CD8-positive, alpha-beta T cell (primary cell): ENCODE measurements at regions of chr17 and their contacts with region 1.

Region 1: DNA sequence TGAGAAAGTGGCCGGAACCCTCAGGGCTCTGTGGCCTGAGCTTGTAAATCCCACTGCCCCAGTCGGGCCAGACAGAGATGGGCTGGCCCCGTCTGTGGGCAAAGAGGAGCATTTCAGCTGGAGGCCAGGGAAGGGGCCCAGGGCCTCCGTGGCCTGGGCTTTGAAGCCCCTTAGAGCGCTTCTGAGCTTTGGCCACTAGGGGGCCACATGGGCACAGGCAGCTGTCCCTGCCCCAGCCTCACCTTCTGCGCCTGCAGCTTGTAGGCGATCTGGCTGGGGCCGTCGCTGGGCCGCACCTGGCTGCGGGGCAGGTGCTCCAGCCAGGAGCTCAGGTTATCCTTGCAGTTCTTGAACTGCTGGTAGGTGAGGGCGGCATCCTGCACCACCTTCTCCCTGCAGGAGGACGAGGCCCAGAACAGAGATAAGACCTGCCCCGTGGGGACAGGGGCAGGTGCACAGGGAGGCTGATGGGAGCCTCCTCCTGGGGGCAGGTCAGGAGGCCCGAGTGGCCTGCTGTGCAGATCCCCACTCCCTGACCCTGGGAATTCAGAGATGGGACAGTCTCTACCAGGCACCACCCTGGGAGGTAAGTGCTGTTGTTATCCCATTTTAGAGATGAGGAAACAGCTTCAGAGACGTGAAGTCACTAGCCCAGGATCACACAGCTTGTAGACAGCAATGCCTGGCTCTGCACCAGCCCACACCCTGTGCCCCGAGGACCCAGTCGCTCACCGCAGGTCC is 12.8 kb downstream of the EVPL start:
- DNase-seq: peak; percentile 52 to 90 (median 81)
- ATAC-seq: peak; percentile 100
- H3K4me3 ChIP-seq: peak overlapping the region in 1 of 2 experiments; percentile 20
- H3K4me3 Mint-ChIP-seq: peak overlapping the region; percentile 64
- H3K27ac ChIP-seq: peak overlapping the region in 1 of 2 experiments; percentile 26
- H3K27ac Mint-ChIP-seq: no peak overlapping the region
- H3K4me1 ChIP-seq: peaks cover 14% of the 10 kb centered on the region
- H3K4me1 Mint-ChIP-seq: peaks cover 14% of the 10 kb centered on the region
- H3K27me3 ChIP-seq: no peaks in the 10 kb centered on the region
- H3K27me3 Mint-ChIP-seq: no peaks in the 10 kb centered on the region
- CTCF ChIP-seq: peak; percentile 94

Region 2: DNA sequence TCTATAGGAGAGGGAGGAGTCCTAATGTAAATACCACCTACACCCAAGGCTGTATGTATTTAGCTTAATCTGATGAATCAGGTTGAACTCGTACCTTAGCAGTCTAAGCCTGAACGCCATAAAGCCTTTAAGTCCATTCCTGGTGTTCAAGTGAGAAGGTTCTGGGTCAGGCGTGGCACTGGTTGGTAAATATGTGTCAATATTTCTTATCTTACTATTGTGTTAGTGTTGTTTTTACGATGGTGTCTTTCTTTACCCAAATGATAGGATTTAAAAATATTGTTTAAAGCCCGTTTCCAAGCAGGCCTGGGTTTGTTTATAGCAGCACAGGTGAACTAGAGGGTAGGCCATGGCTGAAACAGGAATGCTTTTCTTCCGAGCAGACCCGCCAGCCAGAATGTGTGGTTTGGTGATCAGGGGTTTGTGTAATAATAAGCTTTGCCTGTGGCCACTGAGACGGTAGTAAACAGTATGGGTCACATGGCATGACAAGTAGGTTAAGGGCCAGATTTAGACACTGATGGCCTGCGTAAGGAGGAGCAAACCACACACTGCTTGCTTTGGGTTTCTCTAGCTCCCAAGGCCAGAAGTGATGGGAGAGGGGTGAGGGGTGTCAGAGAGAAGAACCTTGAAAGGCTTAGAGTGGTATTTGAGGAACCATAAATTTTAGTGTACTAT is 554.6 kb before region 1 on chr17:
- CTCF ChIA-PET with region 1: no interaction called
- POLR2A ChIA-PET with region 1: no interaction called
- intact Hi-C with region 1: no loop called
- DNase-seq: peak in 1 of 9 experiments; percentile 17
- ATAC-seq: no peak
- H3K4me3 ChIP-seq: no peak overlapping the region
- H3K4me3 Mint-ChIP-seq: no peak overlapping the region
- H3K27ac ChIP-seq: peak overlapping the region in 1 of 2 experiments; percentile 22
- H3K27ac Mint-ChIP-seq: no peak overlapping the region
- H3K4me1 ChIP-seq: peaks cover 16% of the 10 kb centered on the region
- H3K4me1 Mint-ChIP-seq: peaks cover 42% of the 10 kb centered on the region
- H3K27me3 ChIP-seq: no peaks in the 10 kb centered on the region
- H3K27me3 Mint-ChIP-seq: no peaks in the 10 kb centered on the region
- CTCF ChIP-seq: no peak

Region 3: DNA sequence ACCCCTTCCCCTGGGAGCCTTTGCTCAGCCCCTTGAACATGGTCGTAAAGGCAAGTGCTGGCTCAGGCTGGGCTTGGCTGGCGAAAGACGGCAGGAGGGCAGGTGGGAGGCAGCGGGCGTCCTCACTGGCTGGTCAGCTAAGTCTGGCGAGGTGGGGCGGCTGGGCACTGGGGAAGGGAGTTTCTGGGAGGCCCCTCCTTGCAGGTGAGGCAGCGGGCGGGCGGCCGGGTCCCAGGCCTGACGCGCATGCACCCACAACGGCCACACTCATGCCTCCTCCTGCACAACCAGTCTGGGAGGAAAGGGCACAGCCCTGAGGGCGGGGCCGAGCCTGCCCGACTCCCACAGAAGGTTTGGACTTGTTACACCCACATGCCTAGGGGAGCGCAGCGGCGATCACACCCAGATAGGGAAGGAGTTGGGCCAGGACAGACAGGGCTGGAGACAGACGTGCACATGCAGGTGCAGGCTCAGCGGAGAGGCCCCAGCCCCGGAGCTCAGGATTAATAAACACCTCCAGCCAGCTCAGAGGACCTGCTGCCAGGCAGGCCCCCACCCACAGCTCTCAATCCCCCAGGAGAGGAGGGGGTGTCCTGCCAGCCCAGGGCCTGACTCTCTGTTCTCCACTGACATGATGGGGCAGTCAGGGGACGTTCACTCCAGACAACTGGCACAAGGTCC is 12.9 kb after region 1 on chr17 and contains the start of gene EVPL:
- CTCF ChIA-PET with region 1: interaction called, 32 read pairs
- POLR2A ChIA-PET with region 1: interaction called, 11 read pairs
- intact Hi-C with region 1: loop called in 1 of 2 experiments (anchors 1 kb)
- DNase-seq: no peak
- ATAC-seq: no peak
- H3K4me3 ChIP-seq: no peak within 1 kb of the TSS
- H3K4me3 Mint-ChIP-seq: no peak within 1 kb of the TSS
- H3K27ac ChIP-seq: no peak within 1 kb of the TSS
- H3K27ac Mint-ChIP-seq: peak within 1 kb of the TSS; percentile 98
- H3K4me1 ChIP-seq: peaks cover 43% of the 10 kb centered on the region
- H3K4me1 Mint-ChIP-seq: peaks cover 39% of the 10 kb centered on the region
- H3K27me3 ChIP-seq: no peaks in the 10 kb centered on the region
- H3K27me3 Mint-ChIP-seq: no peaks in the 10 kb centered on the region
- CTCF ChIP-seq: no peak
- total RNA-seq, gene EVPL: 0.38 to 1.1 TPM

Region 4: DNA sequence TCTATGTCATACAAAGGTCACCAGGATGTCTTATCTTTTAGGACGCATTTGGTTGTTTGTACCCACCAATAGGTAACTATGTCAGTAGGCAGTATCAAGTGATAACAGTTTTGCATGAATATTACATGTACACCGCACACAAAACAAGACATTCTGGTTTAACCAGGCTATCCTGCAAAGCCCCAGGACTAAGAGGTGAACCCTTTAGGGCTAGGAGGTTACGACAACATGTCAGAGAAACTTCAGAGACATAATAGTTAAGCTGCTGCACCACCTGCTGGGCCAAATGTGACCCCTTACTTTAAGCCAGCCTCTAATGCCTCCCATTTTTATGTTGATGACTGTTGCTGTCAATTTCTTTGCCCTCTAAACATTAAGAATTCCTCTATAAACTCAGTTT is 42.5 kb after region 1 on chr17:
- CTCF ChIA-PET with region 1: interaction called, 56 read pairs
- POLR2A ChIA-PET with region 1: interaction called, 5 read pairs
- intact Hi-C with region 1: loop called in 1 of 2 experiments (anchors 1 kb)
- DNase-seq: peak in 2 of 9 experiments; percentile 26 to 39
- ATAC-seq: peak; percentile 46
- H3K4me3 ChIP-seq: no peak overlapping the region
- H3K4me3 Mint-ChIP-seq: no peak overlapping the region
- H3K27ac ChIP-seq: no peak overlapping the region
- H3K27ac Mint-ChIP-seq: no peak overlapping the region
- H3K4me1 ChIP-seq: no peaks in the 10 kb centered on the region
- H3K4me1 Mint-ChIP-seq: no peaks in the 10 kb centered on the region
- H3K27me3 ChIP-seq: no peaks in the 10 kb centered on the region
- H3K27me3 Mint-ChIP-seq: no peaks in the 10 kb centered on the region
- CTCF ChIP-seq: peak; percentile 11

Region 5: DNA sequence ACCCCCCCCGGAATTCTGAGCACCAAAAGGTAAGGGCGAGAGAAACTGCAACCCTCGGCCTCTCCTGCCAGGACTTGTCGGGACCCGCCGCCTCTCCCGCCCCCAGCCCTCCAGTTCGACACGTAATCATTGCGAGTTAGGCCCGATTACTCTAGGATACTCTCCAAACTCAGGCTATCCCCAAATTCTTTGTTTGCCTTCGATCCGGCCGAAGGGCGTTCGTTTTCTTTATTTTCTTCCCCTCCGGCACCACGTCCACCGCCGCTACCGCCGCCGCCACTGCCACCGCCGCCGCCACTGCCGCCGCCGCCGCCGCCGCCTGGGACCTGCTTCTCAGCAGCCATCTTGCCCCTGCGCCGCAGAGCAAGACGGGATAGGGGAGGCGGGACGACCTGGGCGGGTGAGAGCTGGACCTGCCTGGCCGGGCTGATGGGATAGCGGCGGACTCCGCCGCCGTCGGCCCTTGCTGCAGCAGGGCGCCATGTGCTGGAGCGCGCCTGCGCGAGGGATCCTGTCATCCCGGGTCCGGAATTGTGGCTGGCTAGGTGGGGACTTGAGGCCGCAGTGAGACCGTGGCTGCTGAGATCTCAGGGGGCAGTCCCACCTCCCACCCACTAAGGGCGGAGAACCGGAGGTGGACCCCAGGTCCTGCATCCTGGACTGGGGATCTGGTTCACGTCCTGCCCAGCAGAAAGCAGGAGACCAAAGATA is 57.9 kb after region 1 on chr17 and contains the start of gene SRP68:
- CTCF ChIA-PET with region 1: interaction called, 37 read pairs
- POLR2A ChIA-PET with region 1: interaction called, 6 read pairs
- intact Hi-C with region 1: loop called in 1 of 2 experiments (anchors 1 kb)
- DNase-seq: peak; percentile 63 to 91 (median 83)
- ATAC-seq: peak; percentile 82
- H3K4me3 ChIP-seq: peak within 1 kb of the TSS; percentile 86 to 98
- H3K4me3 Mint-ChIP-seq: peak within 1 kb of the TSS; percentile 96
- H3K27ac ChIP-seq: peak within 1 kb of the TSS; percentile 77 to 81
- H3K27ac Mint-ChIP-seq: peak within 1 kb of the TSS; percentile 95
- H3K4me1 ChIP-seq: peaks cover 44% of the 10 kb centered on the region
- H3K4me1 Mint-ChIP-seq: peaks cover 53% of the 10 kb centered on the region
- H3K27me3 ChIP-seq: peaks cover 18 to 28% of the 10 kb centered on the region in 2 experiments
- H3K27me3 Mint-ChIP-seq: peaks cover 19% of the 10 kb centered on the region
- CTCF ChIP-seq: no peak
- total RNA-seq, gene SRP68: 93.6 to 99.9 TPM

Region 6: GRCh38 chr17:76103274-76104139 is 89.2 kb after region 1 on chr17 and contains the start of gene EXOC7:
- CTCF ChIA-PET with region 1: interaction called, 48 read pairs
- POLR2A ChIA-PET with region 1: interaction called, 4 read pairs
- intact Hi-C with region 1: loop called (anchors 1 to 2 kb)
- DNase-seq: peak; percentile 83 to 97 (median 93)
- ATAC-seq: peak; percentile 93
- H3K4me3 ChIP-seq: peak within 1 kb of the TSS; percentile 74 to 75
- H3K4me3 Mint-ChIP-seq: peak within 1 kb of the TSS; percentile 98
- H3K27ac ChIP-seq: peak within 1 kb of the TSS; percentile 61 to 77
- H3K27ac Mint-ChIP-seq: peak within 1 kb of the TSS; percentile 95
- H3K4me1 ChIP-seq: peaks cover 21% of the 10 kb centered on the region
- H3K4me1 Mint-ChIP-seq: peaks cover 29% of the 10 kb centered on the region
- H3K27me3 ChIP-seq: no peaks in the 10 kb centered on the region
- H3K27me3 Mint-ChIP-seq: no peaks in the 10 kb centered on the region
- CTCF ChIP-seq: no peak
- total RNA-seq, gene EXOC7: 97.3 to 101 TPM

Region 7: DNA sequence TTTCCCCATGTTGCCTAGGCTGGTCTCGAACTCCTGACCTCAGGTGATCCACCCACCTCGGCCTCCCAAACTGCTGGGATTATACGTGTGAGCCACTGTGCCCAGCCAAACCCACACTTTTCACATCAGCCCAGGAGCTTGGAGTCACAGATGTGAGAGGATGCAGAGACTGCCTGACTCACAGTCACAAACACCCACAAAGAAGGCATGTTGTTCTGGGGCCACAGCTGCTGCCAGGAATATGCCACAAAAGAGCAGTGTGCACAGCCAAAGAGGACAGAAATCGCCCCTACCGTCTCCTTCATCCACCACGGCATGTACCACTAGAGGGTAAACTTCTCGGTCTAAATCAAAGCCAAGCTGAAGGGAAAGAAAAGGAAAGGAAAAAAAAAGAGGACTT is 151.8 kb after region 1 on chr17:
- CTCF ChIA-PET with region 1: no interaction called
- POLR2A ChIA-PET with region 1: no interaction called
- intact Hi-C with region 1: no loop called
- DNase-seq: peak in 1 of 9 experiments; percentile 25
- ATAC-seq: no peak
- H3K4me3 ChIP-seq: no peak overlapping the region
- H3K4me3 Mint-ChIP-seq: no peak overlapping the region
- H3K27ac ChIP-seq: no peak overlapping the region
- H3K27ac Mint-ChIP-seq: no peak overlapping the region
- H3K4me1 ChIP-seq: no peaks in the 10 kb centered on the region
- H3K4me1 Mint-ChIP-seq: peaks cover 6% of the 10 kb centered on the region
- H3K27me3 ChIP-seq: no peaks in the 10 kb centered on the region
- H3K27me3 Mint-ChIP-seq: no peaks in the 10 kb centered on the region
- CTCF ChIP-seq: no peak

Region 8: DNA sequence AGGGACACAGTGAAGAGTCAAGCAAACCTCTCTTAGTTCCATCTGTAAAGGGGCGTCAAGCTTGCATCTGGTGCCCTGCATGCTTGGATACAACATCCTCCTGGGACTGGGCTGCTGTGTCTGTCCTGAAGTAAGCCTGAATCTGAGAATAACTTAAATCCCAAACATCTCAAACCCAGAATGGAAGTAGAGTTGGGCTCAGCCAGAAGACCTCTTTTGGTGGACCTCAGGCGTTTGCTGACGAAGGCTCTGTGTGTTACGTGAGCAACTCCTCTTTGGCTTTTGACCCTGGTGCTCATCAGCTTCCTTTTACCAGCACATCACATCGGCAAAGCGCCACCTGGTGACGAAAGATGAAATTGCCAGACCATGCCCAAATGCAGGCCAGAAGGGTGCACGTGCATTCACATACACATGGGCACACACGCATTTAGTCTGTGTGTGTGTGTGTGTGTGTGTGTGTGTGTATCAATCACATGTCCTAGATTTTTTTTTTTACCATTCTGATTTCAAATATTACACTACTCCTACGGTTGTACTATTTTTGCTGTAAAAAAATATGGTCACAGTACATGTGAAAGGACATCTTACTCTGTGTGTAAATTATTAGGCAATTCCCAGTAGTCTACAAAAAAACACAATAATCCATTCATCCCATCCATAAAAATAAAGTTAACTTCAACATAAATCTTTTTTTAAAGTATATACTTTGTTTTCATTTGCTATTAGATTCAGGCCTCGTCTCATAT is 167.8 kb after region 1 on chr17:
- CTCF ChIA-PET with region 1: interaction called, 12 read pairs
- POLR2A ChIA-PET with region 1: interaction called, 3 read pairs
- intact Hi-C with region 1: loop called in 1 of 2 experiments (anchors 1 kb)
- DNase-seq: peak; percentile 90 to 98 (median 93)
- ATAC-seq: peak; percentile 77
- H3K4me3 ChIP-seq: no peak overlapping the region
- H3K4me3 Mint-ChIP-seq: peak overlapping the region; percentile 64
- H3K27ac ChIP-seq: peak overlapping the region; percentile 42 to 46
- H3K27ac Mint-ChIP-seq: peak overlapping the region; percentile 95
- H3K4me1 ChIP-seq: peaks cover 73% of the 10 kb centered on the region
- H3K4me1 Mint-ChIP-seq: peaks cover 65% of the 10 kb centered on the region
- H3K27me3 ChIP-seq: no peaks in the 10 kb centered on the region
- H3K27me3 Mint-ChIP-seq: no peaks in the 10 kb centered on the region
- CTCF ChIP-seq: peak; percentile 69

Region 9: DNA sequence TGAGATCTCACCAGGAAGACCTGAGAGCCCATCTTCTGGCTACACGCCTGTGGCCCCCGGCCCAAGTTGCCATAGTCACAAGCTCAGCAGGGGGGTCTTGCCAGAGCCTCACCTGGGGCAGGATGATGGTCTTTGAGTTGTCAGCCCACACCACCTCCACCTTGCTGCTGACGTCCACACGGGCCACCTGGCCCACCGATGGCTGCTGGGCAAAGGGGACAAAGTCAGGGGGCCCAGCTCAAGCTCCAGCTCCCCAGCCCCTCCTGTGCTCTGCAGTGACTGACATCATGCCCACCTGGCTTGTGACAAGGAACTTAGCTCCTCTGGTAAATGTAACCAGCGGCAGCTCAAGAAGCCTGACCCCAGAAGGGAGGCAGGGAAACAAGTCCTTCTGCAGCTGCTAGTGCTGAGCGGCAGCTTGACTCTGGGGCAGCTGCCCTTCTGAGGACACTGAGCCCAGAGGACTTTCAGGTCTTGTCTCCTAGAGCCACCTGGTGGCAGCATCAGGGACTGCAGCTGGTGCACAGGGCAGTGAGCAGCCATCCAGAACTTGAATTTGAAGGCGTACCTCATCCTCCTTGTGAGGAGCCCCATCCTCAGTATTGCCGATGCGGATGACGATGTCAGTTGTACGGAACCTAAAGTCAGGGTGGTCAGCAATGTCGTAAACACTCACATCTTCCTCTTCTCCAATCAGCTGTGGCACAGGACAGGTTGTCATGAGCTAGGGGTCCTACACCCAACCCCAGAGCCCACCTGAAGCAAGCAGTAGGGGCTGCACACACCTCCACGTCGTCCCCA is 383.5 kb after region 1 on chr17:
- CTCF ChIA-PET with region 1: interaction called, 11 read pairs
- POLR2A ChIA-PET with region 1: no interaction called
- intact Hi-C with region 1: no loop called
- DNase-seq: peak; percentile 73 to 90 (median 84)
- ATAC-seq: peak; percentile 95
- H3K4me3 ChIP-seq: no peak overlapping the region
- H3K4me3 Mint-ChIP-seq: no peak overlapping the region
- H3K27ac ChIP-seq: no peak overlapping the region
- H3K27ac Mint-ChIP-seq: no peak overlapping the region
- H3K4me1 ChIP-seq: no peaks in the 10 kb centered on the region
- H3K4me1 Mint-ChIP-seq: no peaks in the 10 kb centered on the region
- H3K27me3 ChIP-seq: no peaks in the 10 kb centered on the region
- H3K27me3 Mint-ChIP-seq: no peaks in the 10 kb centered on the region
- CTCF ChIP-seq: peak; percentile 98